OCI-LY7 (cell line): ENCODE measurements at regions of chr11 and their contacts with region 1.

Region 1: DNA sequence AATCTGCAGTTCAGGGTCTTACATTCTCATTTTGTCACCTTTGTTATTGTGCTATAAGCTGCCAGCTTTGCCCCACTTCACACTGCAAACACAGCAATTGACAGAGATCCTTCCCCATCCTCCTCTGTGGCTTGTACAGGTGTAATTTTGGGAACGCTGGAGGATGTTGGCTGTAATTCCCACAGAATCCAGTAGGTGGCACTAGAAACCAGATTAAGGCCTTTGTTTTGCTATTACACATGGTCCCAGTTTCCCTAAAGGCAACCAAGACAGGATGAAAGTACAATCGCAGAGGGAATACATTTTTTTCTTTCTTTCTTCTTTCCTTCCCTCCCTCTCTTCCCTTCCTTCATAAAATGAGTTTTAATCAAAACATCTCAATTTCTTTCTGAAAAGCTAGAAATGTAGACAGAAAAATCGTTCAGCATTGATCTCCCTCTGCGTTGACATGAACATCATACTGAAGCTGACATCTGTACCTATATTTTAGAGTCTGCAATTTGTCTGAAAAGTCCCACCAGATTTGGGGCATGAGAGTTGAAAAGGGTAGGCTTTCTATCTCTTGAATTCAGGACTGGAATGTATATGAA is 21.3 kb upstream of the NELL1 start:
- DNase-seq: peak; percentile 43
- H3K4me3 ChIP-seq: no peak overlapping the region
- H3K27ac ChIP-seq: no peak overlapping the region
- H3K4me1 ChIP-seq: no peaks in the 10 kb centered on the region
- CTCF ChIP-seq: peak; percentile 92

Region 2: GRCh38 chr11:20599221-20600019 is 48.7 kb before region 1 on chr11 and contains the start of gene SLC6A5:
- CTCF ChIA-PET with region 1: no interaction called
- POLR2A ChIA-PET with region 1: no interaction called
- intact Hi-C with region 1: no loop called
- DNase-seq: peak; percentile 2
- H3K4me3 ChIP-seq: no peak within 1 kb of the TSS
- H3K27ac ChIP-seq: no peak within 1 kb of the TSS
- H3K4me1 ChIP-seq: no peaks in the 10 kb centered on the region
- CTCF ChIP-seq: no peak
- total RNA-seq, gene SLC6A5: not detected in 2 replicates

Region 3: DNA sequence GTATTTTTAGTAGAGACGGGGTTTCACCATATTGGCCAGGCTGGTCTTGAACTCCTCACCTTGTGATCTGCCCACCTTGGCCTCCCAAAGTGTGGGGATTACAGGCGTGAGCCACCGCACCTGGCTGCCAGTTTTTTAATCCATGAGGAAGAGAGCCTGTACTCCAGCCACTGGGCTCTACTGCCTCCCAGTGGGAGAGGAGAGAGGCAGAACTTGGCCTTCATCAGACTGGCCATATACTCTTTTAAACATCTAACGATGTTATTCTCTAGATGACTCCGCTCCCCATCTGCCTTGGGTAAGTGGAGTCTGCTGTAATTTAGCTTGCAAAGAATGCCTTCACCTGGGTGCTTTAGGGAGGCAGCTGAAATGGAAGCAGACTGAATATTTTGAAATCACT is 14.0 kb before region 1 on chr11:
- CTCF ChIA-PET with region 1: no interaction called
- POLR2A ChIA-PET with region 1: no interaction called
- intact Hi-C with region 1: no loop called
- DNase-seq: no peak
- H3K4me3 ChIP-seq: no peak overlapping the region
- H3K27ac ChIP-seq: no peak overlapping the region
- H3K4me1 ChIP-seq: no peaks in the 10 kb centered on the region
- CTCF ChIP-seq: no peak

Region 4: DNA sequence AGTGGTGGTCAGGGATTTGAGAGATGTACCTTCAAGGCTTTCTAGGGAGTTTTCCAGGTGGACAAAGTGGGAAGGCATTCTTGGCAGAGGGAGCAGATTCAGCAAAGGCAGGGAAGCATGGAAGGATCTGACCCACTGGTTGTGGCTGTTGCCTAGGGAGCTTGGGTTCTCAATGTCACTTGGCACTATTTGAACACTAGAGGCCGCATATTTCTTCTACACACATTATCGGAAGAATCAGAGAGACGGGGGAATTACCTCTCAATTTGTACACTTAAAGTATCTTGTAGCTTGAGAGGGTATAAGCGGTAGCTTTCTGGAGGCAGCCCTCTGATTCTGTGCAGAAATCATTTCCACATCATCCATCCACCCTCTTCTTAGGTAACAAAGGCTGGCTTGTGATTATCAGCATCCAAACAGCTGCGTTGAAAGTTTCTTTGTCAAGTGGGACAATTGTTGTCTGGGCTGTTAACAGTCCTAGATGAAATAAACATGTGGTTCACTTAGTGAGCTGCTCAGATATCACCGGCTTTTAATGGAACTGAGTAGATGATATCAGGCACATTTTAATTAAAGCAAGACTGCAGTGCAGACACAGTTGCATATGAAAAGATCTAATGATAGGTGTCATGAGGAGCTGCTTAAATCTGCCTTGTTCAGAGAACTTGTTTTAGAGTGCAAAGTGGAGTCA is 23.9 kb after region 1 on chr11:
- CTCF ChIA-PET with region 1: no interaction called
- POLR2A ChIA-PET with region 1: interaction called, 3 read pairs
- intact Hi-C with region 1: loop called (anchors 2 kb)
- DNase-seq: no peak
- H3K4me3 ChIP-seq: no peak overlapping the region
- H3K27ac ChIP-seq: no peak overlapping the region
- H3K4me1 ChIP-seq: no peaks in the 10 kb centered on the region
- CTCF ChIP-seq: 0 out of 2 replicates have a peak, but pooled peaks have one; percentile 10

Region 5: DNA sequence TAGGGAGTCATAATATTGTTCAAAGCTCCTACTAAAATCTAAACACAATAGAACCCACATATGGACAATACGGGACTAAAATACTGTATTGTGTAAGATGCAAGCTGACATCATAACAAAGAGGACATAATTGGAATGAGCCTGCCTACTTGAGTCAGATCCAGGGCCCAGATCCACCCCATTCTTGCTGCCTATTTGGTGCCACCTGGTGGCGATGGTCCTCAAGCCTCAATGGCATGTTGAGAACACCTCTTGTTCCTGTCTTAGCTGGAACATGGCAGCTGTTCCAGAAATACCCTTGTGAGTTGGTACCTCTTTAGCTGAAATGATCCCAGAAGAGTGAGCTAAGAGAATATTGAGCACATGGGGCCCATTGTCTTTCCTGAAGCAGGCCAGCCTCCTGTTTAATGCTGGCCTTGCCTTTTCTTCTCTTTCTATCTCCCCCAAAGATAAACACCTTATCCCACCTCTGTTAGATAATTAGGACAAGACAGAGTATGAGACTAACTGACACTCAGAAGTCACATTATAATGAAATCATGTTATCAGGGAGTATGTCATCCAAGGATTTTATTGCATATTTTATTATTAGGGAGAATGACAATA is 863.9 kb after region 1 on chr11:
- CTCF ChIA-PET with region 1: no interaction called
- POLR2A ChIA-PET with region 1: no interaction called
- intact Hi-C with region 1: loop called (anchors 2 kb)
- DNase-seq: peak; percentile 39
- H3K4me3 ChIP-seq: no peak overlapping the region
- H3K27ac ChIP-seq: no peak overlapping the region
- H3K4me1 ChIP-seq: no peaks in the 10 kb centered on the region
- CTCF ChIP-seq: peak; percentile 77

Region 6: DNA sequence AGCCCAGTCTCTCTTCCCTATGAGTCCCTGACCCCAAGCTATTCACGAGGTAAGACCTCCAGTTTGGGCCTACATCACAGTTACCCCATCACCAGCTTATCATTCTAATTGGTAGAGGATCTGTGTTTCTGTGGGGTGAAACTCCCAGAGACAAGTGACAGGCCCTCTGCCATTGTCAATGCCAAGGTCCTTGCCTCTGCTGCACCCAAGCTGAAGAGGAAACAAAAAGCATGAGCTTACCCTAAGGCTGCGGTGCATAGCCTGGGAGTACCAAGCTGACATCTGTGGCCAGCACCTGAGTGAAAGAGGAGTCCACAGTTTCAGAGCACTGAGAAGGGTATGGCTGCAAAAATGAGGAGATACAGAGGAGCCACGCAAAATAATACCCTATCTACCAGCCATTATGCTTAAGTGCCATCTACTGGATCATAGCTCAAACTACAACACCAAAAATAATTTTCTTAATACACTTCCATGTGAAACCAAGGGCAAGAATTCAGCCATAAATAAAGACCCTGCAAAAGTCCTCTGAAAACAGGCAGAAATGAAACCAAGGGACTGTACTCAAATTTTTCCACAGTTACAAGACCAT is 1482.5 kb after region 1 on chr11:
- CTCF ChIA-PET with region 1: no interaction called
- POLR2A ChIA-PET with region 1: no interaction called
- intact Hi-C with region 1: loop called (anchors 5 kb)
- DNase-seq: peak; percentile 1
- H3K4me3 ChIP-seq: no peak overlapping the region
- H3K27ac ChIP-seq: no peak overlapping the region
- H3K4me1 ChIP-seq: no peaks in the 10 kb centered on the region
- CTCF ChIP-seq: peak; percentile 70